Colonic mucosa (tissue), 4 donors: ENCODE measurements at regions of chr10 and their contacts with region 1.

Region 1: DNA sequence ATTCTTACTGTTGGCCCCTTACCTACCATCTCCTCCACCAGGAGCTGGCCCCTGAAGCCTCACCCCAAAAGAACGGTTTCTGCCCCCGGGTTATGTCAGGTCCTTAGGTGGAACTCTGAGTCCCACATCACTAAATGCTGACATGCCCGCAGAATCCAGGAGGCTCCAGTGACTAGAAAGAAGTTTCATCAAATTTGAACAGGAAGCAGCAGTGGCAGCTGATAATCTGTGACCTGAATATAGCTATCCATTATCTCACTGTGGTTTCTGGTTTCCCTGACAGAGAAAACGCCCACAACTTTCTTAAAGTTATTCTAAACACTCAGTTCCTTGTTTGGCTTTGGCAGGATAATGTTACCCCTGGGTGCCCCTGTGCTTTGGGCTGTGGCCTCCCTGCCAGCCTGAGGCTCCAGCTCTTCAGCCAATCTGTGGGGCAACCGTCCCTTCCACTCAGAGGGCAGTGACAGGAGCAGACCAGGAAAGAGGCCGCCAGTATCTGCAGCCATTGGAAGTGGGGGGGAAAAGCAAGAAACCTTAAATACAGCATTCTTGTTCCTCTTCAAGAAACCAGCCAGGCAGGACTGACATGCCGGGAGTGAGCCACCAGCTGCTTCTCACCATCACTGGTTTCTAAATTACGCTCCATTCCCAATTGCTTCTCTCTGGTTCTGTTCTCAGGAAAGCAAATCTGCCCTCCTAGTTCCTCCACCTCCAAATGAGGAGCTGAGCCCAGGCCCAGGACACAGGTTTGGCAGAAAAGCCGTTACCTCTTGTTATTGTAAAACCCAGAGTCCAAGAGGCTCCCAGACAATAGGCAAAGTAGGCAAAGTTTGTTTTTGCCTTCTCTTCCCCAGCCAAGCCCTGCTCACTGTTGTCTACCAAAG is 41.2 kb upstream of the VCL start:
- DNase-seq: peak; percentile 24
- H3K4me3 ChIP-seq: no peak overlapping the region
- H3K27ac ChIP-seq: peak overlapping the region; percentile 61
- H3K4me1 ChIP-seq: no peaks in the 10 kb centered on the region
- H3K27me3 ChIP-seq: no peaks in the 10 kb centered on the region
- CTCF ChIP-seq: no peak

Region 2: GRCh38 chr10:73576178-73576889 is 380.4 kb before region 1 on chr10:
- intact Hi-C with region 1: no loop called
- DNase-seq: no peak
- H3K4me3 ChIP-seq: peak overlapping the region; percentile 19
- H3K27ac ChIP-seq: peak overlapping the region; percentile 72
- H3K4me1 ChIP-seq: no peaks in the 10 kb centered on the region
- H3K27me3 ChIP-seq: no peaks in the 10 kb centered on the region
- CTCF ChIP-seq: no peak

Region 3: DNA sequence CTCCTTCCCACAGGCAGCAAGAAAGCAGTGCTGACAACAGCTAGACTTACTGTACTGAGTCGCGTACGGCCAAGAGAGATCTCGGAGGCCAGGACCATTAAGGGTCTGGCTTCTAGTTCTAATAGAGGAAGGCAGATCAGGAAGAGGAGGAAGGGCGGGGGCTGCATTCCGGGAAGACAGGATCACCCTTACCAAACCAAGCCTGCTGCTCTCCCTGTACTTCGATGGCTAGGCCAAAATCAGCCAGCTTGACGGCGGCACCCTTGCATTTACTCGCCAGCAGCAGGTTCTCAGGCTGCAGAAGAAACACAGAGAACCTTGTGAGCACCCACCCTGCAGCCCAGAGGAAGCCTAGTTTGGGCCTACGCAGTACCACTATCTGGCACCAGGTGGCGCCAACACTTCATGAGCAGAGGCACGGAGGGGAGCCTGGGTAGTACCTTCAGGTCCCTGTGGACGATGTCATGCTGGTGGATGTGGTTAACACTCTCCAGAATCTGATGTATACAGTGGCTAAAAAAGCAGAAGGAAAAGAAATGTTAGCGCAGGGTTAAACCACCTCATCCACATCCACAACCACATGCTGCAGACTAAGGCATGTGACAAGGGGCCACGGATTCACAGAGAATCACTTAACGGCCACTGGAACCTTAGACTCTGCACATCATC is 107.8 kb before region 1 on chr10:
- intact Hi-C with region 1: no loop called
- DNase-seq: peak; percentile 88
- H3K4me3 ChIP-seq: no peak overlapping the region
- H3K27ac ChIP-seq: no peak overlapping the region
- H3K4me1 ChIP-seq: no peaks in the 10 kb centered on the region
- H3K27me3 ChIP-seq: no peaks in the 10 kb centered on the region
- CTCF ChIP-seq: peak; percentile 100

Region 4: GRCh38 chr10:74081192-74081803 is 124.6 kb after region 1 on chr10:
- intact Hi-C with region 1: loop called (anchors 10 kb)
- DNase-seq: peak; percentile 36
- H3K4me3 ChIP-seq: no peak overlapping the region
- H3K27ac ChIP-seq: no peak overlapping the region
- H3K4me1 ChIP-seq: no peaks in the 10 kb centered on the region
- H3K27me3 ChIP-seq: no peaks in the 10 kb centered on the region
- CTCF ChIP-seq: peak; percentile 63